CD4-positive, alpha-beta memory T cell (primary cell): ENCODE measurements at regions of chr13 and their contacts with region 1.

Region 1: DNA sequence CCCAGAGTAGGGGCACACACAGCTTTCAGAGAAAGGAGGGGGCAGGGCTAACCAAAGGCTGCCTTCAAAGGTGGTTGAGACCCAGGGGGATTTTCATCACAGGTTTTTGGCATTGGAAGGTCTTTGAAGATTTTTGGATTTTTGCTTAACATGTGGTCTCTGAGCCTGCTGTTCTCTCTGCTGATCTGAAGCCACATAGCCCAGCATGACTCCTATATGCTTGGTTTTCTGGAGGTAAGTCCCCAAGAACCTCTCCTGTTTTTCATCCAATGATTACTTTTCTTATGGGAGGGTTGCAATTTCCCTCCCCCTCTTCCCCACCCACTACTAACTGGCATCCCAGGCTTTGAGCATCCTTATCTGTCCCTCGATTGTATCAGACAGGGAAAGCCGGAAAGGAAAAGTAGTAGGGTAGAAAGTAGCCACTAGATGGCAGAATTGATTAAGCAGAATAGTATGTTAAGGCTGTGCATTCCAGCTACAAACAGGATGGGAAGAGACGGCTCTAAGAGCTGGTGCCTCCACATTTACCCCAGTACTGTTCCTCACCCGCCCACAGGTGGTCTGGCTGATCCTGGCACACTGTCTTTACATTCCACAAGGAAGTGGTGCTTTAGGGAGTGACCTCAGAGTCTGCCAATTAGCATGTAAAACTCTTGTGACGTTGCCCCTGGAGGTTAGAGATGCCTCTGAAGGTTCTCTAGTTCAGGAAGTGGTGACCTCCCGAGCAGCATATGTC is 218.9 kb upstream of the EDNRB start:
- DNase-seq: peak in 4 of 5 donors; percentile 27 to 41 (median 30)
- H3K4me3 ChIP-seq: no peak overlapping the region
- H3K4me3 Mint-ChIP-seq: peak overlapping the region in 6 of 8 donors; percentile 20 to 71 (median 62)
- H3K27ac ChIP-seq: no peak overlapping the region
- H3K27ac Mint-ChIP-seq: peak overlapping the region in 1 of 7 donors; percentile 34
- H3K4me1 ChIP-seq: peaks cover 5% of the 10 kb centered on the region
- H3K4me1 Mint-ChIP-seq: peaks cover 4 to 6% (median 5%) of the 10 kb centered on the region in 4 donors
- H3K27me3 ChIP-seq: no peaks in the 10 kb centered on the region
- H3K27me3 Mint-ChIP-seq: peaks cover 0 to 3% of the 10 kb centered on the region in 2 donors

Region 2: DNA sequence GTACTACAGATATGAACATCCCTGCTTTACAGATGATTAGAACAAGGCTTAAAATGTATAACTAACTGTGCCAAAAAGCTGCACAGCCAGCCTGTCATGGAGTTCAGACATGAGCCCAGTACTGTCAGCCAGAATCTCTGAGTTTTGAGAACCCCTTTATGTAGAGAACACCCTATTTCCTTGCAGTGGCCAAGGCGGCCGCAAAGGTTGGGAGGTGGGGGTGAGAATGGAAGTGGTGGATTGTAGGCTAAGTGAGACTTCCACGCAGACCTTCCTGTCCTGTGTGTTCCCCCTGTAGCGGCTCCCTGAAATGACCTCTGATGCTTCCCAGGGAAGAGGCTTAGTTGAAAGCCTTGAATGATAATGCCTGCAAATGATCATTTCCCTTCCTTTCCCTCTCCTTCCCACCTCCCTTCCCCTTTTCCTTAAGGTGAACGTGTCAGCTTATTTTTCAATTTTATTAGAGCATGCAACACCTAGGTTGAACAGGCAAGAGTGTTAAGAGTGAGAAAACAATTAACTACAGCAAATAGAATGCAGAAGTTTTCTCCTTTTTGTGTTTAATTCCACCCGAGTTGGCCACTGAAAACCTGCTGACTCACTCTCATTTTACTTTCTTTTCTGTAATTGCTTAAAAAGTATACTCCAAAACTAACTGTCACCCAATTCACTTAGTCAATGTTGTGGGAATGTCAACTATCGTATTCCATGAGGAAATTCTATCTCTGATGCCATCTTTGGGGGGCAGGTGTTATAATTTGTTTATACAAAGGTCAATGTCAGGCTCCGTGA is 51.9 kb before region 1 on chr13:
- CTCF ChIA-PET with region 1: no interaction called
- POLR2A ChIA-PET with region 1: no interaction called
- intact Hi-C with region 1: no loop called
- DNase-seq: no peak
- H3K4me3 ChIP-seq: no peak overlapping the region
- H3K4me3 Mint-ChIP-seq: no peak overlapping the region
- H3K27ac ChIP-seq: no peak overlapping the region
- H3K27ac Mint-ChIP-seq: no peak overlapping the region
- H3K4me1 ChIP-seq: no peaks in the 10 kb centered on the region
- H3K4me1 Mint-ChIP-seq: no peaks in the 10 kb centered on the region
- H3K27me3 ChIP-seq: no peaks in the 10 kb centered on the region
- H3K27me3 Mint-ChIP-seq: peaks cover 6 to 12% of the 10 kb centered on the region in 2 donors

Region 3: GRCh38 chr13:78759704-78760103 is 622.1 kb after region 1 on chr13:
- CTCF ChIA-PET with region 1: interaction called, 10 read pairs
- POLR2A ChIA-PET with region 1: no interaction called
- intact Hi-C with region 1: no loop called
- DNase-seq: no peak
- H3K4me3 ChIP-seq: no peak overlapping the region
- H3K4me3 Mint-ChIP-seq: no peak overlapping the region
- H3K27ac ChIP-seq: no peak overlapping the region
- H3K27ac Mint-ChIP-seq: no peak overlapping the region
- H3K4me1 ChIP-seq: no peaks in the 10 kb centered on the region
- H3K4me1 Mint-ChIP-seq: no peaks in the 10 kb centered on the region
- H3K27me3 ChIP-seq: no peaks in the 10 kb centered on the region
- H3K27me3 Mint-ChIP-seq: peaks cover 1 to 10% of the 10 kb centered on the region in 2 donors

Region 4: GRCh38 chr13:79212064-79212619 is 1074.6 kb after region 1 on chr13:
- CTCF ChIA-PET with region 1: no interaction called
- POLR2A ChIA-PET with region 1: no interaction called
- intact Hi-C with region 1: no loop called
- DNase-seq: no peak
- H3K4me3 ChIP-seq: no peak overlapping the region
- H3K4me3 Mint-ChIP-seq: no peak overlapping the region
- H3K27ac ChIP-seq: no peak overlapping the region
- H3K27ac Mint-ChIP-seq: no peak overlapping the region
- H3K4me1 ChIP-seq: no peaks in the 10 kb centered on the region
- H3K4me1 Mint-ChIP-seq: no peaks in the 10 kb centered on the region
- H3K27me3 ChIP-seq: no peaks in the 10 kb centered on the region
- H3K27me3 Mint-ChIP-seq: peaks cover 5 to 10% of the 10 kb centered on the region in 2 donors

Region 5: GRCh38 chr13:79393564-79394249 is 1256.1 kb after region 1 on chr13:
- CTCF ChIA-PET with region 1: interaction called, 5 read pairs
- POLR2A ChIA-PET with region 1: no interaction called
- intact Hi-C with region 1: loop called (anchors 1 kb)
- DNase-seq: peak; percentile 40 to 61 (median 49)
- H3K4me3 ChIP-seq: peak overlapping the region; percentile 25 to 35
- H3K4me3 Mint-ChIP-seq: peak overlapping the region; percentile 75 to 88 (median 82)
- H3K27ac ChIP-seq: peak overlapping the region; percentile 40
- H3K27ac Mint-ChIP-seq: peak overlapping the region; percentile 87 to 93 (median 90)
- H3K4me1 ChIP-seq: peaks cover 62% of the 10 kb centered on the region
- H3K4me1 Mint-ChIP-seq: peaks cover 44 to 64% (median 56%) of the 10 kb centered on the region in 4 donors
- H3K27me3 ChIP-seq: no peaks in the 10 kb centered on the region
- H3K27me3 Mint-ChIP-seq: no peaks in the 10 kb centered on the region

Region 6: GRCh38 chr13:79541426-79542049 is 1404.0 kb after region 1 on chr13:
- CTCF ChIA-PET with region 1: interaction called, 13 read pairs
- POLR2A ChIA-PET with region 1: no interaction called
- intact Hi-C with region 1: no loop called
- DNase-seq: peak in 4 of 5 donors; percentile 59 to 66 (median 62)
- H3K4me3 ChIP-seq: no peak overlapping the region
- H3K4me3 Mint-ChIP-seq: no peak overlapping the region
- H3K27ac ChIP-seq: no peak overlapping the region
- H3K27ac Mint-ChIP-seq: no peak overlapping the region
- H3K4me1 ChIP-seq: no peaks in the 10 kb centered on the region
- H3K4me1 Mint-ChIP-seq: peaks cover 0 to 2% (median 0%) of the 10 kb centered on the region in 4 donors
- H3K27me3 ChIP-seq: no peaks in the 10 kb centered on the region
- H3K27me3 Mint-ChIP-seq: no peaks in the 10 kb centered on the region